ENCODE measurements at regions of chr11 and their contacts with region 1.

Region 1: DNA sequence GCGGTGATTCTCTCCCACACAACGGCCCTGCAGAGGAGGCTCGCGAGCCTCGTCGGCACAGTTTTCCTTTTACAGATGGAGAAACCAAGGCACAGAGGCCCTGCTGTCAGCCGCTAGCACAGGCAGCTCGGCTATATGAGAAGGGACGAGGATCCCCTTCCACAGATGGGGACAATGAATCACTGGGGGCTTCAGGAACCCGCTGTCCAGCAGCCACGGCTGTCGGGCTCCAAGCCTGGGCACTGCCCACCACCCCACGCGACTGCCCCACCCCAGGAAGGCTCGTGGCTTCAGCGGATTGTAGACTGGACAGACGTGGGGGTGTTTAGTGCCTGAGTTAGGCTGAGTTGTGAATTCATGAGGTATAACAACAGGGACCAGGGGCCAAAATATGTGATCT is 17.2 kb upstream of the FGF3 start:
- DNase-seq: no peak
- ATAC-seq: no peak
- H3K4me3 ChIP-seq: no peak overlapping the region
- H3K27ac ChIP-seq: no peak overlapping the region
- H3K4me1 ChIP-seq: no peaks in the 10 kb centered on the region
- H3K27me3 ChIP-seq: no peaks in the 10 kb centered on the region
- CTCF ChIP-seq: no peak

Region 2: DNA sequence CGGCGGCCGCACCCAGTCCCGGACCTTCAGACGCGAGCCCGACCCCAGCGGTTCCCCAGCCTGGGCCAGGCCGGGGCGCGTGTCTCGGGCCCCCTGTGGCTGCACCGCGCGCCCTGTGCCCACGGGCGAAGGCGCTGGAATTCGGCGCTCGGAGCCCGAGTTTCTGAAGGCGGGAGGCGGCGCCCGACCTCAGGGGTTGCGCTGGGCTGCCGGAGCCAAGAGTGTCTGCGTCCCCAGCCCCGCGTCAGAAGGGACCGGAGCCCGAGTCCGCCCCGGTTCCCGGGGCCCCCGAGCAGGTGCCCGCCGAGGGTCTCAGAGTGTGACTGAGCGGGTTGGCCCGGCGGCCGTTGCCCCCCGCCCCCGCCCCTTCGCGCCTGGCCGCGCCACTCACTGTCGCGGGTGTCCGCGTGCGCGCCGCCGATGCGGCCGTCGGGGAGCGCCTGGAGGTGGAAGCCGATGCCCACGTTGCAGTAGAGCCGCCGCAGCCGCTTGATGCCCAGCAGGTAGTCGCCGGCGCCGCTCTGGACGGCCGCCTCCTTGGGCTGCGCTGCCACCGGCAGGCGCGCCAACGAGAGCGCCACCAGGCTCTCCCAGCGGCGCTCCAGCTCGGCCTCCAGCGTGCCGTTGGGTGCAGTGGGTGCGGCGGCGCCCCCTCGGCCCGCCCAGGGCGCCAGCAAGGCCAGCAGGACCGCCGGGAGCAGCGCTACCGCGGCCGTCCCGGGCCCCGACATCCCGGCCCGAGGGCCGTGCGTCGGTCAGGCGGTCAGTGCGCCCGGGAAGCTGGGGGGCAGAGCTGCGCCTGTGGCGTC is 61.8 kb before region 1 on chr11:
- CTCF ChIA-PET with region 1: no interaction called
- POLR2A ChIA-PET with region 1: no interaction called
- in situ Hi-C with region 1: no loop called
- intact Hi-C with region 1: no loop called
- DNase-seq: no peak
- ATAC-seq: peak; percentile 67
- H3K4me3 ChIP-seq: no peak overlapping the region
- H3K27ac ChIP-seq: no peak overlapping the region
- H3K4me1 ChIP-seq: peaks cover 3% of the 10 kb centered on the region; the same call in 1 of the 2 replicates
- H3K27me3 ChIP-seq: peaks cover 21% of the 10 kb centered on the region
- CTCF ChIP-seq: no peak

Region 3: GRCh38 chr11:70128435-70128906 is 292.1 kb after region 1 on chr11:
- CTCF ChIA-PET with region 1: interaction called, 10 read pairs
- POLR2A ChIA-PET with region 1: no interaction called
- in situ Hi-C with region 1: no loop called
- intact Hi-C with region 1: no loop called
- DNase-seq: no peak
- ATAC-seq: peak; percentile 85
- H3K4me3 ChIP-seq: no peak overlapping the region
- H3K27ac ChIP-seq: peak overlapping the region; percentile 5; the same call in 1 of the 2 replicates
- H3K4me1 ChIP-seq: peaks cover 18% of the 10 kb centered on the region
- H3K27me3 ChIP-seq: no peaks in the 10 kb centered on the region
- CTCF ChIP-seq: no peak

Region 4: DNA sequence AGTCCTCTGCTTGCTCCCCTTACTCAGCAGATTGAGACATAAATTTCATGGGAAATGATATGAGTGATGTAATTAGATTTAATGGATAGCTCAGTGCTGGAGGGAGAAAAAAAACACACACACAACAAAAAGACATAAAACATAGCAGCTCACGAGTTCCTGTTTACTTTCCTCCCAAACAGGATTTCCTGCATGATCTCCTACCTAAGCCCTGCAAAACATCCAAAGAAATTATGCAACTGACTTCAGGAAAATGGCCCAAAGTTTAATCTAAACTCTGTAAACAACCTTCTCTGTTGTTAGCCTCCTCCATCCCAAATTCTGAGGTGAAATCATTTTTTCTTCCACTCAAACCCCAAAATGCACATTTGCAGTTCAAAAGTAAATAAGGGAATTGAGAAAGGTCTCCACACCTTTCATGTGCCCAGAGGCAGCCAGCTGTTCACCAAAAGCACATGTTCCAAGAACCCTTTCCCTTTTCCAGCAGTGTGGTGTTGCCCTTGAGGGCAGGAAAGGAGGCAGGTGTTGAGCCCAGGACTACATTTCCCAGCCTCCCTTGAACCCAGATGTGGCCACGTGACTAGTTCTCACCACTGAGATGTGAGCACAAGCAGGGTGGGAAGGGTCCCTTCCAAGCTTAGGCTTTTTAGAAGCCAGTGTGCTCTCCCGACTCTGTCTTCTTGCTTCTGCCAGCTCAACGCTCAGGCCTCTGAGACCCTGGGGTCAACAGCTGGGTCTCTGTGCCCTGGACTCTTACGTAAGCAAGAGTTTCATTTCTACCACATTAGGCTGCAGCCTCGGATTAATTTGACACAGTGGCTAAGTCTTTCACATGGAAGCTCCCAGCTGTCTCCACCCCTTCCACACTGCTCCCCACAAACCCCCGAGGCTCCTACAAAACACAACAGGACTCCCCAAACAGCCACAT is 863.2 kb after region 1 on chr11:
- CTCF ChIA-PET with region 1: no interaction called
- POLR2A ChIA-PET with region 1: no interaction called
- in situ Hi-C with region 1: no loop called
- intact Hi-C with region 1: no loop called
- DNase-seq: no peak
- ATAC-seq: peak; percentile 74
- H3K4me3 ChIP-seq: no peak overlapping the region
- H3K27ac ChIP-seq: no peak overlapping the region
- H3K4me1 ChIP-seq: no peaks in the 10 kb centered on the region
- H3K27me3 ChIP-seq: peaks cover 2% of the 10 kb centered on the region
- CTCF ChIP-seq: no peak